GM12878 (cell line): ENCODE measurements at regions of chr15 and their contacts with region 1.

Region 1: DNA sequence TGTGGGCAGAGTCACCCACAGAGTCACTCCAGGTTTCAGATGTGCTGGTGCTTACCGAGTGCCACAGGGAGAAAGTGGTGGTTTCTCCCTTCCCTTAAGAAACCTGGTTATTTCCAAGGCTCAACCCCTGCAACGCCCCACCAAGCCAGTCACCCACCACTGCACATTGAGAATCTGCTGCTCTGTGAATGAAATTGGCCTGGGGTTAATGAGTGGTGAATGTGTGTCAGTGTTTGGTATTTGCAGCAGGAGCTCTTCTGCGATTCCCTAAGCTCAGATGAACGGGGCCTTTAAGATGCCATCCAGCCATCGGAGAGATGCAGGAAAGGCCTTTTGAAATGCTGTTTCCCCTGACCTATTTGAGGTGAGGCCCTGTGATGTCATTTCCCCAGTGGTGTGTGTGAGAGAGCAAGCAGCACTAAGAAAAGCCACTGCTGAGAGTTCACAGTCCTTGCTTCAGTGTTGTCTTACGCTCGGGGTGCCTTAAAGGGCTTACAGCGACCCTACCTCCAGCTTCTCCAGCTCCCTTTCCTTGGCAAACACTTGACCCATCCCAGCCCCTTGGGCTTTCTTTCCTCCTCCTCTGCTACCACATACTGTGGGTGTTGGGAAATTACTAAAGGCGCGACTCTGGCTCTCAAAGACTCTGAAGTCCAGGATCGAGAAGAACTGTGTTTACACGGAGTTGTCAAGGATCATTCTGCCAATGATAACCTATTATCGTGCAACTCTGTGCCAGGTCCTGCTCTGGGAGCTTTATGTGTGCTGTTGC is 68.9 kb downstream of the SMAD3 start:
- DNase-seq: no peak
- ATAC-seq: peak; percentile 89
- H3K4me3 ChIP-seq: peak overlapping the region; percentile 51
- H3K27ac ChIP-seq: peak overlapping the region; percentile 89
- H3K4me1 ChIP-seq: peaks cover 67% of the 10 kb centered on the region
- H3K27me3 ChIP-seq: no peaks in the 10 kb centered on the region
- CTCF ChIP-seq: no peak
- EP300 ChIP-seq: no peak
- POLR2A ChIP-seq: peak; percentile 71
- RAD21 ChIP-seq: no peak

Region 2: DNA sequence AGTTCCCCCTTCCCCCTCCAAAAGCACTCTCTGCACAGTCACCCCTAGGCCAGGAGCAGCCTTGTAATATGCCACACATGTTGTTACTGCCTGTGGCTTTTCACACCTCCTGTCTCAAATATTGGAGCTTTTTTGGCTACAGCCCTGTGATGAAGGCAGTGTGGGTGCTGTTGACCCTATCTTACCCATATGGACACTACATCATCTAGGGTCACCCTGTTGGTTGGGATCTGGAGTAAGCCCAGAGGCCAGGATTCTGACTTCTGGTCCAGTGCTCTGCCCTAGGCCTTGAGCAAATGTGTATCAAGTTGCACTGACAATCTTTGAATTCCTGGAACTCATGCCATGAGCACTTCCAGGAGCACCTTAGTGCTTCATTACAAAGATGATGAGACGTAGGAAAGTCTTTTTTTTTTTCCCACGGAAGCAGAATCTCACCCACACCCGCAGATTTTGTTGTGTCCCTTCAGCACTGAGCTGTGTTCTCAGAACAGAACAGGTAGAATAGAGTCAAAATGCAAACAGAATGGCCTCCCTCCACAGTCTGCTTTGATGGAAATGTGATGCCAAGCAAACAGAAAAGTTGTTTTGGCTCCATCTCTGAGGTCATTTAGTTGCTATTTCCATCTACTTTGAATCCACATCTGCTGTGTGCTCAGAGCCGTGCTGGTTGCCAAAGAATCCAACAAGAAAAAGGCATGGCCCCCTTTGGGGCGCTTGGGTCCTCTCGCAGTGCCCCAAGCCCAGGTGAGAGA is 19.2 kb before region 1 on chr15:
- CTCF ChIA-PET with region 1: interaction called, 6 read pairs
- POLR2A ChIA-PET with region 1: interaction called, 5 read pairs
- RAD21 ChIA-PET with region 1: interaction called, 16 read pairs
- SMC1A ChIA-PET with region 1: interaction called, 179 read pairs
- in situ Hi-C with region 1: no loop called
- intact Hi-C with region 1: no loop called
- DNase-seq: no peak
- ATAC-seq: no peak
- H3K4me3 ChIP-seq: no peak overlapping the region
- H3K27ac ChIP-seq: 0 out of 2 replicates have a peak overlapping the region, but pooled peaks have one; percentile 81
- H3K4me1 ChIP-seq: peaks cover 46% of the 10 kb centered on the region
- H3K27me3 ChIP-seq: no peaks in the 10 kb centered on the region
- CTCF ChIP-seq: no peak
- EP300 ChIP-seq: no peak
- POLR2A ChIP-seq: no peak
- RAD21 ChIP-seq: no peak

Region 3: GRCh38 chr15:67232591-67232990 is 98.3 kb after region 1 on chr15:
- CTCF ChIA-PET with region 1: no interaction called
- POLR2A ChIA-PET with region 1: no interaction called
- RAD21 ChIA-PET with region 1: no interaction called
- SMC1A ChIA-PET with region 1: no interaction called
- in situ Hi-C with region 1: no loop called
- intact Hi-C with region 1: no loop called
- DNase-seq: no peak
- ATAC-seq: no peak
- H3K4me3 ChIP-seq: no peak overlapping the region
- H3K27ac ChIP-seq: no peak overlapping the region
- H3K4me1 ChIP-seq: no peaks in the 10 kb centered on the region
- H3K27me3 ChIP-seq: no peaks in the 10 kb centered on the region
- CTCF ChIP-seq: no peak
- EP300 ChIP-seq: no peak
- POLR2A ChIP-seq: no peak
- RAD21 ChIP-seq: no peak